ENCODE measurements at regions of chr3 and their contacts with region 1.

Region 1: DNA sequence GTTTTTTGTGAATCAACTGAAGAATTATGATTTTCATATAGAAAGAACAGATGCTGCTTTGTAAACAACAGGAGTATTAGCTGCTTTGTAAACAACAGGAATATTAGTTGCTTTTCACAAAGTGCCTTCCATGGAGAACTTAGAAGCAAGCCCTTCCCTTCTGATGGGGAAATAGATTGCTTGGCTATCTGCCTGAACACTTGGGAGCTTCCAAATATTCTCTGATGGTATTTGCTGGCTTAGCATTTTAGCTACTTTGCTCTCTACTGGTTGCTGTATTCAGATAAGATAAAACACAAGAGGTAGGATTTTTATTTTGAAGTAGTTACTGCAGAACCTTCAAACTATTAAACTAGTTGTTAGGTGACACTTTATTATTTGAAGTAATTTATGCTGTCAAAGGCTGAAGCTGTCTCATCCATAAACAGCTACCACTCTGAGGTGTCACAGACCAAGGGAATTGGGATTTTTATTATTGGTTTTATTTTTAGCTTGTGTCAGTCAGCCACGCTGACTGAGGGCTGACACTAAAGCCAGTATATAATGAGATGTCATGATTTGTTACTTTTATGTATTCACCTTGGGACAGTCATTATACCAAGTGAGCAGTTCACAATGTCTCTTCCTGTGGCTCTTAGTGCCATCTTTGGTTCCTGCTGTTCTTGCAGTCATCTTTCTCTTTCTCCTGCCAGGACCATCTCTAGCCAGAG is 50.0 kb downstream of the ZIC1 start:
- DNase-seq: no peak
- ATAC-seq: no peak
- H3K4me3 ChIP-seq: no peak overlapping the region
- H3K4me3 Mint-ChIP-seq: no peak overlapping the region
- H3K27ac ChIP-seq: no peak overlapping the region
- H3K27ac Mint-ChIP-seq: no peak overlapping the region
- H3K4me1 ChIP-seq: no peaks in the 10 kb centered on the region
- H3K4me1 Mint-ChIP-seq: no peaks in the 10 kb centered on the region
- H3K27me3 ChIP-seq: no peaks in the 10 kb centered on the region
- H3K27me3 Mint-ChIP-seq: no peaks in the 10 kb centered on the region

Region 2: DNA sequence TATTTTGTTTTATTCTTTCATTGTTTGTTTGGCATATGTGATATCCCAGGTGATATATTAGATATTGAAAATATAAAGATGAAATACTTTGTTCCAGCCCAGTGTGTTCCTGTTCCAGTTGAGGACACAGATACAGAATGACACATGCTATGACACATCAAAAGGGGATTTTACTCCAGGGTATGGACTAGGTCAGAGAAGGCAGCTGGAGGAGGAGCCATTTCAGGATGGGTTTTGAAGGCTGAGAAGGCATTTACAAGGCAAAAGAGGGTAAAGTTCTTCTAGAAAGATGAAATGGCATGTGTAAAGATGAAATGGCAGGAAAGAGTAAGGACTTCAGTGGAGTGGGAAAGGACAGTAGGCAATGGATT is 113.8 kb after region 1 on chr3:
- CTCF ChIA-PET with region 1: no interaction called
- POLR2A ChIA-PET with region 1: interaction called in 1 of 2 experiments, 10 read pairs
- DNase-seq: no peak
- ATAC-seq: no peak
- H3K4me3 ChIP-seq: no peak overlapping the region
- H3K4me3 Mint-ChIP-seq: no peak overlapping the region
- H3K27ac ChIP-seq: no peak overlapping the region
- H3K27ac Mint-ChIP-seq: no peak overlapping the region
- H3K4me1 ChIP-seq: no peaks in the 10 kb centered on the region
- H3K4me1 Mint-ChIP-seq: no peaks in the 10 kb centered on the region
- H3K27me3 ChIP-seq: no peaks in the 10 kb centered on the region
- H3K27me3 Mint-ChIP-seq: no peaks in the 10 kb centered on the region

Measured in T-cell (primary cell).